Colonic mucosa (tissue), 4 donors: ENCODE measurements at regions of chr20 and their contacts with region 1.

Region 1: GRCh38 chr20:56554869-56555268 is 21.8 kb downstream of the FAM209B start:
- DNase-seq: peak; percentile 38
- H3K4me3 ChIP-seq: no peak overlapping the region
- H3K27ac ChIP-seq: no peak overlapping the region
- H3K4me1 ChIP-seq: no peaks in the 10 kb centered on the region
- H3K27me3 ChIP-seq: no peaks in the 10 kb centered on the region
- CTCF ChIP-seq: no peak

Region 2: GRCh38 chr20:56163816-56164215 is 391.1 kb before region 1 on chr20:
- intact Hi-C with region 1: no loop called
- DNase-seq: no peak
- H3K4me3 ChIP-seq: no peak overlapping the region
- H3K27ac ChIP-seq: no peak overlapping the region
- H3K4me1 ChIP-seq: no peaks in the 10 kb centered on the region
- H3K27me3 ChIP-seq: no peaks in the 10 kb centered on the region
- CTCF ChIP-seq: no peak

Region 3: GRCh38 chr20:56974499-56975236 is 419.8 kb after region 1 on chr20:
- intact Hi-C with region 1: loop called (anchors 2 kb)
- DNase-seq: peak; percentile 41
- H3K4me3 ChIP-seq: no peak overlapping the region
- H3K27ac ChIP-seq: no peak overlapping the region
- H3K4me1 ChIP-seq: no peaks in the 10 kb centered on the region
- H3K27me3 ChIP-seq: peaks cover 4% of the 10 kb centered on the region
- CTCF ChIP-seq: peak; percentile 49

Region 4: DNA sequence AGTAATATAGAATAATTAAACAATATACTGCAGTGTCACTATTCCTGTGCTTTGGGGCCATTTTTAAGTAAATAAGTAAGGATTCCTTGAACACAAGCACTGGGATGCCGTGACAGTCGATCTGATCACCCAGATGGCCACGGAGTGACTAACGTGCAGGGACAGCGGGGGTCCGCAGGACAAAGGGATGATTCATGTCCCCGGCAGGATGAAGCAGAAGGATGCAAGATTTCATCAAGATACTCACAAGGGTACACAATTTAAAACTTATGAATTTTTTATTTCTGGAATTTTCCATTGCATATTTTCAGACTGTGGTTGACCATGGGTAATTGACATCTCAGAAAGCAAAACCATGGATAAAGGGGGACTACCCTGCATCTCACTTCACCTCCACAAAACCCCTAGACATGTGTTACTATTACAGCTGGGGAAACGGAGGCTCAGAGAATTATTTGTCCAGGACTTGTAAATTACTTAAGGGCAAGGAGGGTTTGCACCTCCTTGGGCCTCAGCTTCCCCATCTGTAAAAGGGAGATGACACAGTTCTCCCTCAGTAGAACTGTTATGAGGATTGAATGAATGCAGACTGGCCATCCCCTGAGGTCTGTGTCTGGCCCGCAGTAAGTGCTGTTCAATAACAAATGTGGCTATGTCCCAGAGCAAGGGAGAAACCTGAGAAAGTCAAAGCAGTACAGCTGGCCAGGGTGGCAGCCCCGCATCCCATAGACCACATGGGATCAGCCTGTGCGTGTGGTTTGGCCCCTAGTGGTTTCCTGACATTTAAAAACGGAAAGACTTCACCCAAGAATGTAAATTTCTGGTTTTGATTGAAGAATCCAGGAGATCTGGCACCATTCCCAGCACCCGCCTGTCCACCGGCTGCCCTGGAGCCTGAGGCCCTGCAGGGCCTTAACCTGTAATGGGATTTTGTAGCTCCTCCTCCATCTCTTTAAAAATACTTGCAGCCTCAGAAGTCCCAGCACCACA is 476.0 kb after region 1 on chr20:
- intact Hi-C with region 1: no loop called
- DNase-seq: no peak
- H3K4me3 ChIP-seq: no peak overlapping the region
- H3K27ac ChIP-seq: no peak overlapping the region
- H3K4me1 ChIP-seq: no peaks in the 10 kb centered on the region
- H3K27me3 ChIP-seq: no peaks in the 10 kb centered on the region
- CTCF ChIP-seq: no peak

Region 5: GRCh38 chr20:57061058-57061900 is 506.4 kb after region 1 on chr20:
- intact Hi-C with region 1: loop called (anchors 10 kb)
- DNase-seq: no peak
- H3K4me3 ChIP-seq: no peak overlapping the region
- H3K27ac ChIP-seq: no peak overlapping the region
- H3K4me1 ChIP-seq: no peaks in the 10 kb centered on the region
- H3K27me3 ChIP-seq: no peaks in the 10 kb centered on the region
- CTCF ChIP-seq: no peak

Region 6: DNA sequence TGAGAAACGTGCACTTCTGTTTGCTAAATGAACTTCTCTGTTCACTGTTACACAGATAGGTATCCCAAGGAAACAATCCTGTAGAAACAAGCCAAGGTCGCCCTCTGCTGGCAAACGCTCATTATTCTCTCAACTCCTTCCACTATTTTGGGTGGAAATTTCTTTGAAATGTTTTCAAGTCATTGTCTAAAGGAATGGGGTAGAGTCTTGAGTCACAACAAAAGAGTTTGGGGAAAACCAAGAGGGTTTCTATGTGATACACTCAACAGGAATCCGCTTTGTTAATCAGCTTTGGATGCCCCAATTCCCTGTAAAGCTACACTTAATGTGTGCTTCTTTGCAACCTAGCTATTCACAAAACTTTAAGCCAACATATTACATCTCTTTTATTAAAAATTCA is 791.6 kb after region 1 on chr20:
- intact Hi-C with region 1: loop called (anchors 10 kb)
- DNase-seq: peak; percentile 81
- H3K4me3 ChIP-seq: no peak overlapping the region
- H3K27ac ChIP-seq: no peak overlapping the region
- H3K4me1 ChIP-seq: no peaks in the 10 kb centered on the region
- H3K27me3 ChIP-seq: no peaks in the 10 kb centered on the region
- CTCF ChIP-seq: peak; percentile 55